PC-9 (cell line): ENCODE measurements at regions of chr5 and their contacts with region 1.

Region 1: GRCh38 chr5:82312373-82312856 is 34.3 kb upstream of the RPS23 start:
- DNase-seq: peak; percentile 42 to 55
- H3K4me3 ChIP-seq: no peak overlapping the region
- H3K27ac ChIP-seq: no peak overlapping the region
- H3K4me1 ChIP-seq: peaks cover 13% of the 10 kb centered on the region
- H3K27me3 ChIP-seq: no peaks in the 10 kb centered on the region
- CTCF ChIP-seq: peak; percentile 85

Region 2: GRCh38 chr5:83473346-83474163 is 1161.1 kb after region 1 on chr5:
- CTCF ChIA-PET with region 1: no interaction called
- POLR2A ChIA-PET with region 1: no interaction called
- intact Hi-C with region 1: loop called (anchors 2 kb)
- DNase-seq: peak; percentile 40 to 75
- H3K4me3 ChIP-seq: peak overlapping the region; percentile 63
- H3K27ac ChIP-seq: no peak overlapping the region
- H3K4me1 ChIP-seq: peaks cover 7% of the 10 kb centered on the region
- H3K27me3 ChIP-seq: peaks cover 14% of the 10 kb centered on the region; the same call in 1 of the 2 replicates
- CTCF ChIP-seq: peak; percentile 81

Region 3: GRCh38 chr5:83712001-83712601 is 1399.7 kb after region 1 on chr5:
- CTCF ChIA-PET with region 1: no interaction called
- POLR2A ChIA-PET with region 1: no interaction called
- intact Hi-C with region 1: loop called (anchors 2 kb)
- DNase-seq: peak; percentile 37 to 47
- H3K4me3 ChIP-seq: no peak overlapping the region
- H3K27ac ChIP-seq: no peak overlapping the region
- H3K4me1 ChIP-seq: no peaks in the 10 kb centered on the region
- H3K27me3 ChIP-seq: no peaks in the 10 kb centered on the region
- CTCF ChIP-seq: peak; percentile 87